A673 (cell line): ENCODE measurements at regions of chr12 and their contacts with region 1.

Region 1: DNA sequence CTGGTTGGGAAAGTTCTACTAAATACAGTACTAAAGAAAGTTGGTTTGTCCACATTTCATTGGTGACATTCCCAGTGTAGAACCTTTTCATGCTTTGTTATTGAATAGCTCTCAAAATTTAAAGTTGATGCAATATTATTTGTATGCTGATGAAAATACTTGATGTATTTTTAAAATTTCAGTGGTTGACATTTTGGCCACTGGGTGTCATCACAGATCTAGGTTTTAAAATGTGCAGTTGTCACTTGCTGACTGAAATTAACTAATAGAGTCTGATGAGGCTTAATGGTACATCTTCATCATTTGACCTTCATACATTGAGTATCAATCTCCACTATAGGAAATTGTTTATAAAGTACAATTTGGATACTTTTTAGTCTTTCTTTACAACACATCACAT is 37.1 kb downstream of the CMAS start:
- DNase-seq: peak; percentile 32
- H3K4me3 ChIP-seq: no peak overlapping the region
- H3K27ac ChIP-seq: no peak overlapping the region
- H3K4me1 ChIP-seq: no peaks in the 10 kb centered on the region
- H3K27me3 ChIP-seq: no peaks in the 10 kb centered on the region
- CTCF ChIP-seq: peak; percentile 51

Region 2: GRCh38 chr12:22334410-22335290 is 251.5 kb after region 1 on chr12 and contains the start of gene ST8SIA1:
- CTCF ChIA-PET with region 1: no interaction called
- POLR2A ChIA-PET with region 1: no interaction called
- intact Hi-C with region 1: loop called (anchors 5 kb)
- DNase-seq: peak; percentile 22
- H3K4me3 ChIP-seq: peak within 1 kb of the TSS; percentile 49
- H3K27ac ChIP-seq: no peak within 1 kb of the TSS
- H3K4me1 ChIP-seq: peaks cover 4% of the 10 kb centered on the region
- H3K27me3 ChIP-seq: peaks cover 52% of the 10 kb centered on the region
- CTCF ChIP-seq: no peak
- total RNA-seq, gene ST8SIA1: 0.17 and 0.28 TPM in 2 replicates

Region 3: DNA sequence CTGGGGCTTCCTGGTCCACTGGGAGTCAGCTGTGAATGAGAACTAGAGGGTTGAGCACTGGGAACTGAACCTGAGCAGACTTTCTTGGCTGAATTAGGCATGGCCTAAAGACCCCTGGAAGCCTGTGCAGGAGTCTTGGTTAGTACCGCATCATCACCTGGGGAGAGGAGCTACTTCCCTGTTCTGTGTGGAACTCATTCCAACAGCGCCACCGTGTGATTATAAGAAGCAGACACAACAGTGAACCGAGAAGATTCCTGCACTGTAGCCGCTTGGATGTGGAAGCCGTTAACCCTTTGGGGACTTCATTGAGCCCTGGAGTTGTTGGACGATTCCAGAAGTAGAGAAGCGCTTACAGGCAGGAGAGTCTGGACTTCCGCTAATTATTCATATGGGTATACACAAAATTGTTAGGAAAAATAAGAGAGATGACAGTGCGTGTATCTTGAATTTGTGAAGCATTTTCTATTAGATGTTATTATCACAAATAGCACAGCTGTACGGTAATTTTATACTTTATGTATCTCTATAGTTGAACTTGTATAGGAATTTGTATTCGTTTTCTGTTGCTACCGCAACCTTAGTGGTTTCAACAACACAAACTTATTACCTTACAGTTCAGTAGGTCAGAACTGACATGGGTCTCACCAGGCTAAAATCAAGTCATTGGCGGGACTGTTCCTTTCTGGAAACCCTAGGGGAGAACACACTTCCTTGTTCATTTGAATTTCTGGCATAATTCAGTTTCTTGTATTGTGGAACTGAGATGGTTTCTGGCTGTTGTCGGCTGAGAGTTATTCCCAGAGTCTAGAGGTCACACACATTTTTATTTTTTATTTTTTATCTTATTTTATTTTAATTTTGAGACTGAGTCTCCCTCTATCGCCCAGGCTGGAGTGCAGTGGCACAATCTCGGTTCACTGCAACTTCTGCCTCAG is 360.5 kb after region 1 on chr12:
- CTCF ChIA-PET with region 1: interaction called, 8 read pairs
- POLR2A ChIA-PET with region 1: no interaction called
- intact Hi-C with region 1: loop called (anchors 1 kb)
- DNase-seq: peak; percentile 86
- H3K4me3 ChIP-seq: no peak overlapping the region
- H3K27ac ChIP-seq: no peak overlapping the region
- H3K4me1 ChIP-seq: no peaks in the 10 kb centered on the region
- H3K27me3 ChIP-seq: no peaks in the 10 kb centered on the region
- CTCF ChIP-seq: peak; percentile 83

Region 4: GRCh38 chr12:22459838-22460490 is 376.8 kb after region 1 on chr12:
- CTCF ChIA-PET with region 1: no interaction called
- POLR2A ChIA-PET with region 1: no interaction called
- intact Hi-C with region 1: loop called (anchors 5 kb)
- DNase-seq: peak; percentile 74
- H3K4me3 ChIP-seq: no peak overlapping the region
- H3K27ac ChIP-seq: no peak overlapping the region
- H3K4me1 ChIP-seq: peaks cover 8% of the 10 kb centered on the region
- H3K27me3 ChIP-seq: no peaks in the 10 kb centered on the region
- CTCF ChIP-seq: peak; percentile 73